A673 (cell line): ENCODE measurements at regions of chr13 and their contacts with region 1.

Region 1: GRCh38 chr13:81639984-81640582 is 1299.2 kb upstream of the SPRY2 start:
- DNase-seq: peak; percentile 51
- H3K4me3 ChIP-seq: no peak overlapping the region
- H3K27ac ChIP-seq: no peak overlapping the region
- H3K4me1 ChIP-seq: no peaks in the 10 kb centered on the region
- H3K27me3 ChIP-seq: no peaks in the 10 kb centered on the region
- CTCF ChIP-seq: peak; percentile 69

Region 2: DNA sequence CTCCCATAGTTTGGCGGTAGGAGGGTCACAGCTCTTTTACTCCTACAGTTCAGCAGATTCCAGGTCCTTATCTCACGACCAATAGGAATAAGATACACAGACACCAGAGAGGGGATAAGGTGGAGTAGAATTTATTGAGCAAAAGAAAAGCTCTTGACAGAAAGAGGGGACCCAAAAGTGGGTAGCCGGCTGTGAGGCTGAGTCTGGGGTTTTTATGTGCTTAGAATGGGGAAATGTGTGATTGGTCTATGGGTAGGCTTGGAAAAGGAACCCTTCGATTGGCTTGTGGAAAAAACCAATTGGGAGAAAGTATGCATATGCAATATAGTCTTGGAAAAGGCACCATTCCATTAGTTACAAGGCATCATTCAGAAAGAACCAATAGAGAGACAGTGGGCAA is 57.7 kb after region 1 on chr13:
- CTCF ChIA-PET with region 1: no interaction called
- POLR2A ChIA-PET with region 1: no interaction called
- intact Hi-C with region 1: no loop called
- DNase-seq: no peak
- H3K4me3 ChIP-seq: no peak overlapping the region
- H3K27ac ChIP-seq: no peak overlapping the region
- H3K4me1 ChIP-seq: no peaks in the 10 kb centered on the region
- H3K27me3 ChIP-seq: no peaks in the 10 kb centered on the region
- CTCF ChIP-seq: no peak

Region 3: GRCh38 chr13:81779876-81780275 is 139.8 kb after region 1 on chr13:
- CTCF ChIA-PET with region 1: no interaction called
- POLR2A ChIA-PET with region 1: no interaction called
- intact Hi-C with region 1: loop called (anchors 10 kb)
- DNase-seq: no peak
- H3K4me3 ChIP-seq: no peak overlapping the region
- H3K27ac ChIP-seq: no peak overlapping the region
- H3K4me1 ChIP-seq: no peaks in the 10 kb centered on the region
- H3K27me3 ChIP-seq: no peaks in the 10 kb centered on the region
- CTCF ChIP-seq: no peak